ENCODE measurements at regions of chr2 and their contacts with region 1.

Region 1: DNA sequence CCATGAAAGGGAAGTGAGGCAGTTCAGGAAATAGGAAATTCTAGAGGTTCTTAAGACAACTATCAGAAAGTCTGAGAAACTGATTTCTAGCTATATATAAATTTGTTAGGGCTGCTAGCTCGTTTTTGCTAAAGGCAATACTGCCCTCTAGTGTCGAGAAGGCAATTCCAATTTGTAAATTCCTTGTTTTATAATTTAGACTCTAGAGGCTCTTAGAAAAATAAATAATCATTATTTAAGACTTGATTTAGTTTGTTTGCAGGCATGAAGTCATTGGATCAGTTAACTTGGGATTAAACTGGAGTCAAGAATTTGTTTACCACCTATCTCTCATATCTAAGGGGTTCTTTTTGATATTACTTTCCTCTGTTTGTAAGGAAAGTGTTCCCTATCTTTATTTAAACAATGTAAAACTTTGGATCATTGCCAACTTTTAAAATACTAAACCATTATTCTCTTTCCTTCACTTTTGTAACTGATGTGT is 66.2 kb downstream of the ACVR2A start:
- DNase-seq: peak in 3 of 4 donors; percentile 10 to 47 (median 12)
- ATAC-seq: peak; percentile 71
- H3K4me3 ChIP-seq: no peak overlapping the region
- H3K27ac ChIP-seq: no peak overlapping the region
- H3K4me1 ChIP-seq: peaks cover 9% of the 10 kb centered on the region
- H3K27me3 ChIP-seq: no peaks in the 10 kb centered on the region
- CTCF ChIP-seq: peak; percentile 63 to 87 (median 81)
- POLR2A ChIP-seq: no peak

Region 2: GRCh38 chr2:147082850-147083522 is 828.0 kb before region 1 on chr2:
- intact Hi-C with region 1: loop called (anchors 10 kb)
- DNase-seq: peak; percentile 55 to 64 (median 61)
- ATAC-seq: peak; percentile 75
- H3K4me3 ChIP-seq: no peak overlapping the region
- H3K27ac ChIP-seq: no peak overlapping the region
- H3K4me1 ChIP-seq: no peaks in the 10 kb centered on the region
- H3K27me3 ChIP-seq: no peaks in the 10 kb centered on the region
- CTCF ChIP-seq: peak; percentile 70 to 94 (median 87)
- POLR2A ChIP-seq: no peak